ENCODE measurements at regions of chr1 and their contacts with region 1.

Region 1: GRCh38 chr1:81834921-81835698 is 34.4 kb downstream of the ADGRL2 start:
- DNase-seq: peak; percentile 91
- H3K4me3 ChIP-seq: no peak overlapping the region
- H3K27ac ChIP-seq: no peak overlapping the region
- H3K4me1 ChIP-seq: peaks cover 15% of the 10 kb centered on the region
- H3K27me3 ChIP-seq: no peaks in the 10 kb centered on the region
- CTCF ChIP-seq: no peak
- POLR2A ChIP-seq: peak; percentile 46

Region 2: DNA sequence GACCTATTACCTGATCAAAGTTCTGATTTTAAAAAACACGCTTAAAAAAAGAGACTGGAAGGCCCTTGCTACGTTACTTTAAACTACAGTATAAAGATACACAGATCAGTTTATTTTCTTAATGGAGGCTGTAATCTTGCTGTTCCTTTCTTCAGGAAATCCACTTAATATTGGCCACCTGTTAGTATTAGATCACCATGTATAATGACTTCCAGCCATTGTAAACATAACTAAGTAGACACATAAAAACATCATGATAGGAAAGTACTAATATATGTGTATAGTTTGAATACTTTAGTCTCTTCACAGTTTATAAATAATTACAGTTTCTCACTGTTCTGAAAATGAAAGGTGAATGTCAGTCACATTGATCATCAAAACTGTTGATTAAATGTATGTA is 34.2 kb after region 1 on chr1:
- CTCF ChIA-PET with region 1: interaction called, 4 read pairs
- POLR2A ChIA-PET with region 1: no interaction called
- dilution Hi-C with region 1: no loop called
- intact Hi-C with region 1: loop called (anchors 1 kb)
- DNase-seq: peak; percentile 75
- H3K4me3 ChIP-seq: no peak overlapping the region
- H3K27ac ChIP-seq: no peak overlapping the region
- H3K4me1 ChIP-seq: peaks cover 16% of the 10 kb centered on the region
- H3K27me3 ChIP-seq: no peaks in the 10 kb centered on the region
- CTCF ChIP-seq: no peak
- POLR2A ChIP-seq: no peak

Region 3: GRCh38 chr1:81937791-81938450 is 102.8 kb after region 1 on chr1:
- CTCF ChIA-PET with region 1: no interaction called
- POLR2A ChIA-PET with region 1: no interaction called
- dilution Hi-C with region 1: no loop called
- intact Hi-C with region 1: loop called (anchors 5 kb)
- DNase-seq: no peak
- H3K4me3 ChIP-seq: no peak overlapping the region
- H3K27ac ChIP-seq: no peak overlapping the region
- H3K4me1 ChIP-seq: no peaks in the 10 kb centered on the region
- H3K27me3 ChIP-seq: no peaks in the 10 kb centered on the region
- CTCF ChIP-seq: no peak
- POLR2A ChIP-seq: no peak